Caco-2 (cell line): ENCODE measurements at regions of chr2 and their contacts with region 1.

Region 1: DNA sequence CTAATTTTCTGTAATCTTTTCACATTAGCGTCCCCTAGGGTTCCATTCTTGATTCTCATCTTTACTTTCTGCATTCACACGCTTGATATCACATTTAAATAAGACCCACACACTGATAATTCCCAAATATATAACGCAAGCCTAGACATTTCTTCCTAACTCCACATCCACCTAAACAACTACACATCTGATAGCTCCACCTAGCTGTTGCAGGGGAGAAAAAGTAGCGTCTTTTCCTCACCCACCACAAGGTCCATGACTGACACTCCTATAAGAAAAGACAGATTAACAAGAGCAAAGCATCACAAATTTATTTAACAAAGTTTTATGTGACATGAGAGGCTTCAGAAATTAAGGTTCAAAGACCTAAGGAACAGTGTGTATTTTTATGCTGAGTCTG is 862.2 kb upstream of the DDX18 start:
- DNase-seq: peak in 1 of 2 experiments; percentile 19
- H3K4me3 ChIP-seq: no peak overlapping the region
- H3K4me3 Mint-ChIP-seq: no peak overlapping the region
- H3K27ac Mint-ChIP-seq: no peak overlapping the region
- H3K4me1 ChIP-seq: no peaks in the 10 kb centered on the region
- H3K4me1 Mint-ChIP-seq: no peaks in the 10 kb centered on the region
- H3K27me3 ChIP-seq: no peaks in the 10 kb centered on the region
- H3K27me3 Mint-ChIP-seq: no peaks in the 10 kb centered on the region
- CTCF ChIP-seq: peak; percentile 25 to 39

Region 2: GRCh38 chr2:116585654-116586344 is 366.5 kb before region 1 on chr2:
- CTCF ChIA-PET with region 1: no interaction called
- POLR2A ChIA-PET with region 1: no interaction called
- intact Hi-C with region 1: no loop called
- DNase-seq: no peak
- H3K4me3 ChIP-seq: no peak overlapping the region
- H3K4me3 Mint-ChIP-seq: no peak overlapping the region
- H3K27ac Mint-ChIP-seq: no peak overlapping the region
- H3K4me1 ChIP-seq: no peaks in the 10 kb centered on the region
- H3K4me1 Mint-ChIP-seq: no peaks in the 10 kb centered on the region
- H3K27me3 ChIP-seq: no peaks in the 10 kb centered on the region
- H3K27me3 Mint-ChIP-seq: no peaks in the 10 kb centered on the region
- CTCF ChIP-seq: no peak

Region 3: DNA sequence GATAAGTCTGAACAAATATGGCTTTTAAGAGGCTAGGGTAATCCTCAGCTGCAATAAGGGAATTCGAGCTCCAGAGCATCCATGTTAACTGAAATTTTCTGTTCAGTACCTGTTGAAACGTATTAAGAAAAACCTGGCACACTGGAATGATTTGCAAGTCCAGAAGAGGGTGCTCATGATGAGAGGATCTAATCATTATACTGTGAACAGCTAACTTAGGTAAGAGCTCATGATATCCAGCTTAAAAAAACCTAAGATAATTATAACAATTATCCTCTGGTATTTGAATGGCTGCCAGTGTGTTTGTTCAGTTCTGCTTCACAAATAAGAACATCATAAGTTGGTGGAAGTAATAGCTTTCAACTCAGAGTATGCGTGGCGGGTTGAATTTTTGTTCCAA is 256.0 kb before region 1 on chr2:
- CTCF ChIA-PET with region 1: no interaction called
- POLR2A ChIA-PET with region 1: no interaction called
- intact Hi-C with region 1: loop called (anchors 5 kb)
- DNase-seq: peak in 1 of 2 experiments; percentile 4
- H3K4me3 ChIP-seq: no peak overlapping the region
- H3K4me3 Mint-ChIP-seq: no peak overlapping the region
- H3K27ac Mint-ChIP-seq: no peak overlapping the region
- H3K4me1 ChIP-seq: no peaks in the 10 kb centered on the region
- H3K4me1 Mint-ChIP-seq: no peaks in the 10 kb centered on the region
- H3K27me3 ChIP-seq: no peaks in the 10 kb centered on the region
- H3K27me3 Mint-ChIP-seq: no peaks in the 10 kb centered on the region
- CTCF ChIP-seq: no peak

Region 4: DNA sequence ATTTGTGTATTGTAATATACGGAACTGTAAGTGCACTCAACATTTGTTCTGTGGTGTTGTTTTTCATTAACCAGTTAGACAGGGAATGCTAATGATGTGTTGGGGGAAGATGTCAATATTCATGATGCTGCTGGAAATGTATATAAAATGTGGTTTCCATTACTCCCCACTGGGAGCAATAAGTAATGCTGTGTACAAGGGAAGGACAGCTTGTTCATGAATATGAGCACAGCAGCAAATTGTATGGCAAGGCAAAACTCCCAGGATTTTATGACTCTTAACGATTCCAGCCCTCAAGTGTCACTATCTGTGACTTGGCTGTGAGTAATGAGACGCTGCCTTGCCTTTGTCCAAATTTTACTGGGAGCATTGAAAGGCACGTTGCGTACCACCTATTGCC is 549.9 kb after region 1 on chr2:
- CTCF ChIA-PET with region 1: no interaction called
- POLR2A ChIA-PET with region 1: no interaction called
- intact Hi-C with region 1: no loop called
- DNase-seq: no peak
- H3K4me3 ChIP-seq: no peak overlapping the region
- H3K4me3 Mint-ChIP-seq: no peak overlapping the region
- H3K27ac Mint-ChIP-seq: no peak overlapping the region
- H3K4me1 ChIP-seq: no peaks in the 10 kb centered on the region
- H3K4me1 Mint-ChIP-seq: no peaks in the 10 kb centered on the region
- H3K27me3 ChIP-seq: no peaks in the 10 kb centered on the region
- H3K27me3 Mint-ChIP-seq: peaks cover 4% of the 10 kb centered on the region
- CTCF ChIP-seq: no peak